Head of caudate nucleus (tissue), 42 donors: ENCODE measurements at regions of chr11 and their contacts with region 1.

Region 1: DNA sequence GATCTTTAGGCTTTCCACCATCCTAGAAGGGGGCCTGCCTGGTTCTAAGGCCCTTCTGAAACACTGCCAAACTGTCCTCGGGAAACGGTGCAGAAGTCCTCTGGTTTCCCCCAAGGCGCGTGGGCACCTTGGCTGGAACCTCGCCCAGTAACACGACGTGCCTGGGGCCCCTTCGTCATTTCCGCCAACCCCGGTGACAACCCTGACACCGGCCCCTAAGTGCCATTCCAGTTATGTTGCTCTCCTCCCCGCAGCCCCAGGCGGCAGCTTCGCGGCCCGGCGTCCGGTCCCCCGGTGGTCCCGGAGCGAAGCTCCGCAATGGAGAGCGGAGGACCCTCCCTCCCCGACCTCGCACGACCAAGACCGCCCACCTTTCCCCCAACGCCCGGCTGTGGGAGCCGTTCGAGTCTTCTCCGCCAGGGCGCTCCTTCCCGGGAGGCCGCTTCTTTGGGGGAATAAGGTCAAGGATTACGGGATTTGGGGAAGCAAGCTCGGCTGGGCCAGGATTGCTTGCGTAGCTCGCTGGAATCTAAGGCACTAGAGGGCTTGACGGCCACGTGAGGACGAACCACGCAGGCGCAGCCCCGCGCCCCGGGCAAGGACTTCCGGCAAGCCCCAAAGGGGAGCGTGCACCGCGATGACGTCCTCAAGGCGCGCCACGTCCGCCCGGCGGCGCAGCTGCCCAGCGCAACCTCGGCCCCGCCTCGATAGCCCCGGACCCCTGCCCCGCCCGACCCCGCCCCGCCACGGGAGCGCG is 626 bp downstream of the RNH1 start:
- DNase-seq: peak; percentile 91 to 99 (median 97)

Region 2: GRCh38 chr11:447923-448731 is 58.3 kb before region 1 on chr11:
- intact Hi-C with region 1: loop called (anchors 5 kb)
- DNase-seq: peak; percentile 88 to 98 (median 94)